G401 (cell line): ENCODE measurements at regions of chr22 and their contacts with region 1.

Region 1: GRCh38 chr22:37953437-37954179 is at the starts of genes C22orf23 and POLR2F:
- DNase-seq: peak; percentile 94
- total RNA-seq, gene C22orf23: not detected in 2 replicates
- total RNA-seq, gene POLR2F: 225 and 303 TPM in 2 replicates

Region 2: DNA sequence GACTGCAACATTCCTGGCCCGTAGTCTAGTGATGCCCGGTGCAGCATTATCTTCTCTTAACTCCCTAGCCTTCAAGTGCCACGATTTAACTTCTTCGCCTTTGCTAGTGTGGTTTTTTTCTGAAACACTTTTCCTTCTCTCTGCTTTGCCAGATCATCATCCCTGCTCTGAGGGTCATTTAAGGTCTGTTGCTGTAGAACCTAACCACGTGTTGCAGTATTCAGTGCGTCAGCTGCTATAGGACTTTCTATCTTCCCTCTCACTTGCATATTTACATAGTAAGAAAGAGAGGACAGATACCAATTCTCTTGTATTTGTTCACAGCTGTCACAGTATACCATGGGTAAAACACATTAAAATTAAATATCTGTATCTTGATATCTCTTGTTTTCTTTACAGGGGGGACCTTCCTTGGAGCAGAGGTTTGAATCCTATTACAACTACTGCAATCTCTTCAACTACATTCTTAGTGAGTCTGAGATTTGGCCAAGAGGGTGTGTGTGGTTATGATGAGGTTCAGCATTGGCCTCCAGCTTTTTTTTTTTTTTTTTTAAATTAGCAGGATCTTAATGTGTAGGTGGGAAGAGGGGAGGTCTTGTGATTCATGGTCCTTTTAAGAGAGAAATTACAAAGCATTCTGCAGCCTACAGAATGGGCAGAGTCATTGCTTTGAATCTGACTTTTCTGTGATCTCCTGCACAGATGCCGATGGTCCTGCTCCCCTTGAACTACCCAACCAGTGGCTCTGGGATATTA is 90.9 kb before region 1 on chr22:
- in situ Hi-C with region 1: loop called (anchors 25 kb)
- DNase-seq: no peak